GM10248 (cell line): ENCODE measurements at regions of chr6 and their contacts with region 1.

Region 1: DNA sequence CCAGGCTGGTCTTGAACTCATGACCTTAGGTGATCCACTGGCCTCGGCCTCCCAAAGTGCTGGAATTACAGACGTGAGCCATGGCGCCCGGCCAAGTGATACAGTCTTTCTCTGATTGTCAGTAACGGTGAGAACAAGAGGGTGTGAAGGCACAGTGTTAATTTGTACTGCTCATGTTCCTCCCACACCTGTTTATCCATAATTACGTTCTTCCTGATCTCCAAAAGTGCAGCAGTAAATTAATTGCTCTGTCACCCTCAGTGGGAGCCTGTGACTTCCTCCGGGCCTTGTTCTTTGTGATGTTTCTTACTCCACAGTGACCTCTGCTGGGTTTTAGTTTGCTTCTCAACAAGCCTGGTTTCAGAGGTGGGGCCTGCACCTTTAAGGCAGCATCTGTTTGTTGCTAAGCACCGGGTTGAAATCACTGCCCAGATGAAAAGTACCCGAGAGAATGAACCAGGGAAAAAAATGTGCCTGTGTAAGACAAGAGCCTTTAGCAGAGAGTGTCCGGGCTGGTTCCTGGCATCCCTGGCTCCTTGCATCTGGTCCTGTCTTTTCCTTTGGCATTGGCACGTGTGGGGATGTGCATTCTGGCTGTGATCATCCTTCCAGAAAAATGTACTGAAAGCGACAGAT is 89.1 kb upstream of the CLDN20 start:
- DNase-seq: peak; percentile 73
- CTCF ChIP-seq: peak; percentile 57

Region 2: GRCh38 chr6:154675602-154676088 is 499.0 kb before region 1 on chr6:
- CTCF ChIA-PET with region 1: interaction called, 25 read pairs
- POLR2A ChIA-PET with region 1: no interaction called
- DNase-seq: peak; percentile 87
- CTCF ChIP-seq: peak; percentile 99

Region 3: DNA sequence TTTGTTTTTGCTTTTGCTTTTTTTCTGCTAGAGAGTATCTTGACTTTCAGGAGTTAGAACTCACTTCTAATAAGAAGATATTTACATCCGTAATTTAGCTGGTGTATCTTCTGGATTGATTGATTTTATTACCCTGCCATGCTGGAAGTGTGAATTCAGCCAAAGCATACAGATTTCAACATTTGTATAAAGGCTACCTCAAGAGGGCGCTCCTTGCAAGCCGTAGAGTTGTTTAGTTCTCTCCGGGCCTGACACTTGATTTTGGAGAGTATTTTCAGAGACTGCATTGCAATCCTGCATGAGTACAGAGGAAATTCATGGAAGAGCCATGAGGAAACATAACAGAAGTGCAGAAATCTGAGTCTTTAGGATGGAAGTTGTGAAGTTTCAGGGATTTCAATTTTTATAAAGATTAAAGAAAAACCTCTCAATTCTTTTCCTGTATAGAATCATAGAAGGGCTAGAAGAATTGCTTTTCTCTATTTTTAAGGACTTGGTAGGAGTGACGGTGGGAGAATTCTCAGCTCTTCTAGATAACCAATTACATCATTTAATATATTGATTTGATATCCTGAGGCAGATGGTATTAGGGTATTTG is 246.3 kb before region 1 on chr6:
- CTCF ChIA-PET with region 1: interaction called, 79 read pairs
- POLR2A ChIA-PET with region 1: no interaction called
- DNase-seq: peak; percentile 73
- CTCF ChIP-seq: peak; percentile 76

Region 4: DNA sequence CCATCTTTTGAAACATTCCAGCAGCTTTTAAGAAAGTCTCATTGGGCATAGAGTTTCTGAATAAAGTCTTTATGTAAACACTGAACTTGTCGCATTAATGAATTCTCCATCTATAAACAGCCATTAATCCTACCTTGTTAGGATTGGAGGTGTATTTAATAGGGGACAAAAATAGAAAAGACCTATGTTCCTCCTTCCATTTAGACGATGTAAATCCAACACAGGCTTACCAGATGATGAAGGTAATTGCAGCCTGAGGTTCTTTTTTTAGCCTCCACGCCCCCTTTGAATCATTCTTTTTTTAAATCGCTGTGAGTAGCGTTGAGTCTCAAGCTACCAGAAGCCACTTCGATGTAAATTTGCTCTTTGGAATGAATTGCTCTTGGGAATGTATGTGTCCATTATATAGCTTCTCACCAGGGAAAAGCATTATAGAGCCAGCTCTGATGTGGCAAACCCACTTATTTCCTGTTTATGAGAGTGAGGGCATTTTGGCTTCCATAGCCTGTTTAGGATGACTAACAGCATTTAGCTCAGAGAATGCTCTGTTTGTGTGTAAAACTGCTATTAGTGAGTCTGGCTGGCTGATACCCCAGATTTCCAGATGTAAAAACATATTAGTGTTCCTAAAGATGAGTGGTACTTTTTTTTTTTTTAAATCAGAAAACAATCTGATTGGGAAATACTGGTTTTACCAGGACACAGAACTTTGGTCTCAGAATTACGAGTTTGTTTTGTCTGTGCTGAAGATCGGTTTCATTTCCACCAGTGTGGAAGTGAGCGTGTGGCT is 14.2 kb after region 1 on chr6:
- CTCF ChIA-PET with region 1: interaction called, 21 read pairs
- POLR2A ChIA-PET with region 1: no interaction called
- DNase-seq: no peak
- CTCF ChIP-seq: no peak

Region 5: GRCh38 chr6:155240905-155241600 is 66.4 kb after region 1 on chr6:
- CTCF ChIA-PET with region 1: interaction called, 71 read pairs
- POLR2A ChIA-PET with region 1: interaction called, 3 read pairs
- DNase-seq: no peak
- CTCF ChIP-seq: no peak

Region 6: GRCh38 chr6:155253337-155253736 is 78.6 kb after region 1 on chr6:
- CTCF ChIA-PET with region 1: interaction called, 71 read pairs
- POLR2A ChIA-PET with region 1: no interaction called
- DNase-seq: no peak
- CTCF ChIP-seq: no peak